Mammary epithelial cell (primary cell): ENCODE measurements at regions of chr13 and their contacts with region 1.

Region 1: DNA sequence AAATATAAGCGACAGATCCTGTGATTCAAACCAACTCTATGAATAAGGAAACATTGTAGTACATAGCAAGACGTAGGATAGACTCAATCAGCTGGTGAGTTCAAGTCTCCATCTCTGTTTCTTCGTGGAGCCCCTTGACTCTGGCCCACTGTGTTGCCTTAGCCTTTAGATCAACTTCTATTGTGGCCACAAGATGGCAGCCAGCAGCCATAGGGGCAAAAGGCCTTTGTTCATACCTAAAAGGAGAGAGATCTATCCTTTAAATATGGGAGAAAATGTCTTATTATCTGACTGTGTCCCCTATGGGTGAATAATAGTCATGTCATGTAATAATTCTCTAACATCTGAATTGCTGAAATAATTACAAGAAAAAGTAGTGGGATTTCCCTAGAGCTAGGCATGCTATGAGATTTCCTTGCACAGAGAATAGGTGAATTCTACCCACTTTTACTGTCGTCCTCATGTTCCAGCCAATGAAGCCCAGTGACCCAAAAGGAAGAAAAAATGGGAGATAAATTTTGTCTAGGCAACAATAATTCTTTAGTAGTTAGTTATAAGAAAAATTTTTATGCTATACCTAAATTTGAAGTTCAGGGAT is 129.4 kb downstream of the PCDH20 start:
- DNase-seq: no peak
- H3K4me3 ChIP-seq: no peak overlapping the region
- H3K27ac ChIP-seq: no peak overlapping the region
- H3K4me1 ChIP-seq: no peaks in the 10 kb centered on the region
- H3K27me3 ChIP-seq: no peaks in the 10 kb centered on the region
- CTCF ChIP-seq: peak in 1 of 2 donors; percentile 29

Region 2: GRCh38 chr13:61685682-61686012 is 399.4 kb after region 1 on chr13:
- CTCF ChIA-PET with region 1: no interaction called
- dilution Hi-C with region 1: no loop called
- in situ Hi-C with region 1: no loop called
- intact Hi-C with region 1: loop called (anchors 5 kb)
- DNase-seq: no peak
- H3K4me3 ChIP-seq: no peak overlapping the region
- H3K27ac ChIP-seq: no peak overlapping the region
- H3K4me1 ChIP-seq: no peaks in the 10 kb centered on the region
- H3K27me3 ChIP-seq: no peaks in the 10 kb centered on the region
- CTCF ChIP-seq: peak in 1 of 2 donors; percentile 50